ENCODE measurements at regions of chr12 and their contacts with region 1.

Region 1: GRCh38 chr12:49828133-49829091 is at the start of gene NCKAP5L:
- DNase-seq: peak; percentile 90 to 96
- H3K4me3 ChIP-seq: peak within 1 kb of the TSS; percentile 77 to 90 (median 84)
- H3K27ac ChIP-seq: peak within 1 kb of the TSS; percentile 78
- H3K4me1 ChIP-seq: peaks cover 3 to 27% (median 18%) of the 10 kb centered on the region in 4 experiments
- H3K27me3 ChIP-seq: no peaks in the 10 kb centered on the region
- CTCF ChIP-seq: no peak
- EP300 ChIP-seq: no peak
- POLR2A ChIP-seq: peak; percentile 69 to 81
- RAD21 ChIP-seq: no peak
- total RNA-seq, gene NCKAP5L: 27.9 and 30.2 TPM in 2 replicates

Region 2: GRCh38 chr12:49763006-49763591 is 65.3 kb before region 1 on chr12:
- CTCF ChIA-PET with region 1: interaction called, 12 read pairs
- POLR2A ChIA-PET with region 1: no interaction called
- DNase-seq: peak; percentile 38 to 92
- H3K4me3 ChIP-seq: no peak overlapping the region
- H3K27ac ChIP-seq: no peak overlapping the region
- H3K4me1 ChIP-seq: peaks cover 0 to 4% (median 0%) of the 10 kb centered on the region in 4 experiments; a peak in 1 of 7 replicates
- H3K27me3 ChIP-seq: no peaks in the 10 kb centered on the region
- CTCF ChIP-seq: peak; percentile 83 to 89 (median 87)
- EP300 ChIP-seq: no peak
- POLR2A ChIP-seq: no peak
- RAD21 ChIP-seq: peak; percentile 50 to 54; a peak in 3 of 4 replicates

Region 3: DNA sequence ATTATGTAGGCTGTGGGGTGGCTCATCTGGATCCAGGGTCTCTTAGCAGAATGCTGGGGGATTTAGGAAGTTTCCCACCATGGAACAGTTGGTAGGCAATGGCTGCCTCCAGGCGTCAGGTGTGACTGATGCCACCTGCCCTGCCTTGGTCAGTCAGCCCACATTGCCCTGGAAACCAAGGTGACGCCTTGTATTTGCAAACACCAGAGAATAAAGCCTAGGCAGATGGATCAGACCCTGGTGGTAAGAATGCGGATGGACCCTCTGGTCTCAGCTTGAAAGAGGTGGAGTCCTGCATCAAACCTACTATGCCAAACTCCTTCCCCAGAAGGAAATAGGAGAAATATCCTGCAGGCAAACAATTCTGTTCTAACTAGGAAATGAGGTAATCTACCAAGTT is 38.4 kb before region 1 on chr12:
- CTCF ChIA-PET with region 1: interaction called, 5 read pairs
- POLR2A ChIA-PET with region 1: interaction called, 14 read pairs
- DNase-seq: peak in 1 of 2 experiments; percentile 19
- H3K4me3 ChIP-seq: no peak overlapping the region
- H3K27ac ChIP-seq: 0 out of 2 replicates have a peak overlapping the region, but pooled peaks have one; percentile 12
- H3K4me1 ChIP-seq: peaks cover 0 to 4% (median 0%) of the 10 kb centered on the region in 4 experiments; a peak in 2 of 7 replicates
- H3K27me3 ChIP-seq: no peaks in the 10 kb centered on the region
- CTCF ChIP-seq: peak; percentile 7 to 64 (median 37)
- EP300 ChIP-seq: no peak
- POLR2A ChIP-seq: no peak
- RAD21 ChIP-seq: peak in 1 of 2 experiments; percentile 29; a peak in 1 of 4 replicates

Region 4: GRCh38 chr12:49800421-49801140 is 27.8 kb before region 1 on chr12:
- CTCF ChIA-PET with region 1: interaction called, 4 read pairs
- POLR2A ChIA-PET with region 1: interaction called, 14 read pairs
- DNase-seq: no peak
- H3K4me3 ChIP-seq: no peak overlapping the region
- H3K27ac ChIP-seq: no peak overlapping the region
- H3K4me1 ChIP-seq: no peaks in the 10 kb centered on the region
- H3K27me3 ChIP-seq: no peaks in the 10 kb centered on the region
- CTCF ChIP-seq: no peak
- EP300 ChIP-seq: no peak
- POLR2A ChIP-seq: no peak
- RAD21 ChIP-seq: no peak

Region 5: GRCh38 chr12:49809381-49809905 is 19.0 kb before region 1 on chr12:
- CTCF ChIA-PET with region 1: interaction called, 10 read pairs
- POLR2A ChIA-PET with region 1: interaction called, 59 read pairs
- DNase-seq: no peak
- H3K4me3 ChIP-seq: peak overlapping the region in 1 of 4 experiments; percentile 13; a peak in 3 of 8 replicates
- H3K27ac ChIP-seq: peak overlapping the region; percentile 62
- H3K4me1 ChIP-seq: peaks cover 16 to 35% (median 22%) of the 10 kb centered on the region in 4 experiments
- H3K27me3 ChIP-seq: no peaks in the 10 kb centered on the region
- CTCF ChIP-seq: no peak
- EP300 ChIP-seq: no peak
- POLR2A ChIP-seq: no peak
- RAD21 ChIP-seq: no peak

Region 6: DNA sequence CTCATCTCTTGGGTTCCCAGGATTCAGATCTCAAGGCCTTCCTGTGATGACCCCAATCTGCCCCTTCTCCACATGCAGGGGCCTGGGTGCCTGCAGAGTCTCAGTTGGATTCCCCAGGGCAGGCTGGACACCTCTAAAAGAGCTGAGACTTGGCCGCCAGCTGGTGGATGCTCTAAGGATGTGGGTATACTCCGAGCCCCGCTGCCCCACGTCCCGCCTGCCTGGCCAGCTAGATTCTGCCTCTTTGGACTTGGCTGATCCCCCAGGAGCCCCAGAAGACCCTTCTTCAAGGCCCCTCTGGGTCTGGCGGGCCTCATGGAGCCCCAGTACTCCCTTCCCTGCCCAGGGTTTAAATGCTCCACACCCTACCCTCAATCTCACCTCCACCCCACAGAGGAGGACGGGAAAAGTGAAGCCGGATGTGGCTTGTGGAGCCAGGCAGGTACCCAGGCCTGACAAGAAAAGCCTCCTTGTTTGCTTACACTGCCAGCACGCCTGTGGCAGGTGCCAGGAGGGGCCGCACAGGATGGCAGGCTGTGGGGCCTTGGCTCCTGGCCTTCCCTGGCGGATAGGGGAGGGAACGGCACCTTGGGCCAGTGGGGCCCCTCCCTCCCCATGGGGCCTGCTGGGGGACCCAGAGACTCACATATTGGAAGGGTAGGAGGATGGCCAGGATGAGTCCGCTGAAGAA is 60.2 kb after region 1 on chr12:
- CTCF ChIA-PET with region 1: no interaction called
- POLR2A ChIA-PET with region 1: no interaction called
- DNase-seq: no peak
- H3K4me3 ChIP-seq: no peak overlapping the region
- H3K27ac ChIP-seq: no peak overlapping the region
- H3K4me1 ChIP-seq: peaks cover 0 to 16% (median 6%) of the 10 kb centered on the region in 4 experiments; a peak in 6 of 7 replicates
- H3K27me3 ChIP-seq: no peaks in the 10 kb centered on the region
- CTCF ChIP-seq: no peak
- EP300 ChIP-seq: no peak
- POLR2A ChIP-seq: no peak
- RAD21 ChIP-seq: no peak

Measured in H1 (cell line).